SK-N-SH (cell line): ENCODE measurements at regions of chr10 and their contacts with region 1.

Region 1: DNA sequence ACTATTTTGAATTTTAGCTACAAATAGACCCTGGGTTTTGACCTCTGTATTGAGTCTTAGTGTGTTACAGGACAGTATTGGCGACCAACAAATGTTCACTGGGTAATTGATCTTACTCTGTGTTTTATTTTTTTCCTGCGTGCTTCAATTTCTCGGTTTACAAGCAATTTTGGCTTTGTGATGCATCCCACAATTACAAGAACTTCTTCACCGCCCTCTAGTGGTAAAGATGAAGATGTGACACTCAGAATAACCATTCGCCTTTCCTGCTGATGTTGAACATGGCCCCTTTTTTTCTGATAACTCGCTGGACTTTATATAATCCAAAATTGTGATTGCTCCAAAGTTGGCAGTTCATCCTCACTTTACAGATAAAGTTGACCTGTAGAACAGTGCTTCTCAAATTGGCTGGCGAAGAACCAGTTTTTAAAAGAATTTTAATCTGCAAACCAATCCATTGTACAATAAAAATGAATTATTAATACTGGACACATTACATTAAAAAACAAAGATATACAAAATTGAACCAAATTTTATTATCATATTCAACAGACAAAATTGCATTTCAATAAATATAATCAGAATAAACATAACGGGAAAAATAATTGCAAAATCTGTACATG is 20.2 kb upstream of the SMC3 start:
- DNase-seq: peak; percentile 65
- H3K4me3 ChIP-seq: no peak overlapping the region
- H3K27ac ChIP-seq: no peak overlapping the region
- H3K4me1 ChIP-seq: no peaks in the 10 kb centered on the region
- H3K27me3 ChIP-seq: no peaks in the 10 kb centered on the region
- CTCF ChIP-seq: peak; percentile 87
- EP300 ChIP-seq: no peak
- RAD21 ChIP-seq: peak; percentile 93

Region 2: GRCh38 chr10:110042181-110042580 is 505.1 kb before region 1 on chr10:
- CTCF ChIA-PET with region 1: no interaction called
- POLR2A ChIA-PET with region 1: no interaction called
- DNase-seq: no peak
- H3K4me3 ChIP-seq: no peak overlapping the region
- H3K27ac ChIP-seq: no peak overlapping the region
- H3K4me1 ChIP-seq: peaks cover 3 to 9% of the 10 kb centered on the region in 2 experiments; a peak in 2 of 4 replicates
- H3K27me3 ChIP-seq: no peaks in the 10 kb centered on the region
- CTCF ChIP-seq: no peak
- EP300 ChIP-seq: no peak
- RAD21 ChIP-seq: no peak

Region 3: DNA sequence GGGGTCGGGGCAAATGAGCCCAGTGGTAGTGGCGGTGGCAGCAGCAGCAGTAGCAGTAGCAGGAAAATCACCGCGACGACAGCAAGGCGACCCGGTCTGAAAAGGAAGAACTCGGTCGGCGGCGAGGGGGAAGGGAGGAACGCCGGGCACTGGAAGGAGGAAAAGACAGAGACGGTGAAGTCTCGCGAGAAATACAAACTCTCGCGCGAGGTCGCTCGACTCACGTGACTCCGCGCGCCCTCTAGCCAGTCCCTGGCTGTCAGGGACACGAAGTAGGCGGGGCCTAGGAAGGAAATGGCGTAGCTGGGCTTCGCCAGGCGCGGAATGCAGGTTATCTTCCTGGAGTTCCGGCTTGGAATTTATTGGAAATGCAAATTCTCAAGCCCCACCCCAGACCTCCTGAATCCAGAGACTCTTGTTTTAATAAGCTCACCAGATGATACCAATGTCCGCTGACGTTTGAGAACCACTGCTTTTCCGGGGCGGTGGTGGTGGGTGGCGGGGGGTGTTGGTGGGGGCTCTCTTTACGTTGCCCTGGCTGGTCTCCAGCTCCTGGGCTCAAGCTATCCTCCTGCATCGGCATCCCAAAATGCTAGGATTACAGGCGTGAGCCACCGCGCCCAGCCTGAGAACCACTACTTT is 242.3 kb before region 1 on chr10 and contains the start of gene SMNDC1:
- CTCF ChIA-PET with region 1: interaction called, 34 read pairs
- POLR2A ChIA-PET with region 1: interaction called, 3 read pairs
- DNase-seq: peak; percentile 95
- H3K4me3 ChIP-seq: peak within 1 kb of the TSS; percentile 86 to 94
- H3K27ac ChIP-seq: peak within 1 kb of the TSS; percentile 93 to 95
- H3K4me1 ChIP-seq: peaks cover 13 to 18% of the 10 kb centered on the region in 2 experiments; a peak in 3 of 4 replicates
- H3K27me3 ChIP-seq: no peaks in the 10 kb centered on the region
- CTCF ChIP-seq: no peak
- EP300 ChIP-seq: no peak
- RAD21 ChIP-seq: no peak
- polyA plus RNA-seq, gene SMNDC1: 13.3 and 14.2 TPM in 2 replicates

Region 4: DNA sequence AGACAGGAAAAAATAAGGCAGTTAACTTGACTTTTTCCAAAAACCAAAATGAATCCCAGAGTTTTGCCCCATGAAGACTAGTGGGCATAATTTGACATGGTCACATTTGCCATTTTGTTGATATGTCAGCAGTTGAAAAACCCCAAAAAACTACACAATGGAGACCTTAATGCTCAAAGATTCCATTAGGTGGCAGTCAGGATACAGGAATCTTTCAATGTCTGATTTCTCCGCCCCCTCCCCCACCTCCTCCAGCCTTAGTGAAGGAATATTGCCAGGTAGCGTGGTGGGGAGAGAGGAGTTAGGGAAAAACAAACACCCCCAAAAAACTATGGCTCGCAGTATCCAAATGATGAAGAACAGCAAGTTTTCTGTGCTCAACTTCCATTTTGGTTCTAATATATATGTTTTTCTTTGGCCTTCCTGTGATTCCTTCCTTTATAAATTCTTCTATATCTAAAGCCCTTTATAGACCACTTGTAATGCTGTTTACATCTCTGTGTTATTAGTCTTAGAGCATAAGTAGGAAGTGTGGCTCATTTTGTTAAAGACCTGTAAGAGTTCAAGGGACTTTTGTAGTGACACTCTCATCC is 235.8 kb before region 1 on chr10:
- CTCF ChIA-PET with region 1: interaction called, 34 read pairs
- POLR2A ChIA-PET with region 1: no interaction called
- DNase-seq: peak; percentile 64
- H3K4me3 ChIP-seq: no peak overlapping the region; a peak in 1 of 4 replicates
- H3K27ac ChIP-seq: no peak overlapping the region
- H3K4me1 ChIP-seq: peaks cover 0 to 10% of the 10 kb centered on the region in 2 experiments; a peak in 3 of 4 replicates
- H3K27me3 ChIP-seq: no peaks in the 10 kb centered on the region
- CTCF ChIP-seq: peak; percentile 77
- EP300 ChIP-seq: no peak
- RAD21 ChIP-seq: peak; percentile 92

Region 5: GRCh38 chr10:110344622-110345021 is 202.6 kb before region 1 on chr10:
- CTCF ChIA-PET with region 1: interaction called, 10 read pairs
- POLR2A ChIA-PET with region 1: no interaction called
- DNase-seq: no peak
- H3K4me3 ChIP-seq: no peak overlapping the region
- H3K27ac ChIP-seq: no peak overlapping the region
- H3K4me1 ChIP-seq: no peaks in the 10 kb centered on the region
- H3K27me3 ChIP-seq: no peaks in the 10 kb centered on the region
- CTCF ChIP-seq: no peak
- EP300 ChIP-seq: no peak
- RAD21 ChIP-seq: no peak

Region 6: GRCh38 chr10:110354322-110354766 is 192.9 kb before region 1 on chr10:
- CTCF ChIA-PET with region 1: interaction called, 112 read pairs
- POLR2A ChIA-PET with region 1: no interaction called
- DNase-seq: peak; percentile 74
- H3K4me3 ChIP-seq: peak overlapping the region in 1 of 2 experiments; percentile 9; a peak in 1 of 4 replicates
- H3K27ac ChIP-seq: peak overlapping the region in 1 of 2 experiments; percentile 74; a peak in 2 of 4 replicates
- H3K4me1 ChIP-seq: peaks cover 9 to 17% of the 10 kb centered on the region in 2 experiments; a peak in 3 of 4 replicates
- H3K27me3 ChIP-seq: no peaks in the 10 kb centered on the region
- CTCF ChIP-seq: peak; percentile 87
- EP300 ChIP-seq: no peak
- RAD21 ChIP-seq: peak; percentile 83

Region 7: GRCh38 chr10:110497438-110498086 is 49.7 kb before region 1 on chr10 and contains the start of gene DUSP5:
- CTCF ChIA-PET with region 1: interaction called, 12 read pairs
- POLR2A ChIA-PET with region 1: no interaction called
- DNase-seq: peak; percentile 98
- H3K4me3 ChIP-seq: peak within 1 kb of the TSS; percentile 79 to 84
- H3K27ac ChIP-seq: peak within 1 kb of the TSS; percentile 92 to 93
- H3K4me1 ChIP-seq: peaks cover 34 to 50% of the 10 kb centered on the region in 2 experiments
- H3K27me3 ChIP-seq: no peaks in the 10 kb centered on the region
- CTCF ChIP-seq: no peak
- EP300 ChIP-seq: no peak; a peak in 1 of 4 replicates
- RAD21 ChIP-seq: no peak
- polyA plus RNA-seq, gene DUSP5: 38.2 and 52.0 TPM in 2 replicates

Region 8: DNA sequence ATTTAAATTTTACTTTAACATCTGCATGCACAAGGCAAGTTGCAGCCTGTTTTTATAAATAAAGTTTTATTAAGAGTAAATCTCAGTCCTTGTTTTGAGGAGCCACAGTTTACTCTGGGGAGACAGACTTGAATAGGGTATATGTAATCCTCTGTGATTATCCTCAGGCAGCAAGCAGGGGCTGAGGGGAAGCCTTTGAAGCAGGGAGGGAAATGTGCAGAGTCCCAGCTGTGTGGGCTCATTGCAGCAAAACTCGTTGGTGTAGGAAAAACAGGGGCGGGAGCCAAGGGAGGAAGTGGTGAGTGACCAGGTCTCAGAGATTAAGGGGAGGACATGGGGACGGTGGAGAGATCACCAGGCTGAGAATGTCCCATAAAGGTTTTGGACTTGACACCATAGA is 14.1 kb before region 1 on chr10:
- CTCF ChIA-PET with region 1: interaction called, 19 read pairs
- POLR2A ChIA-PET with region 1: no interaction called
- DNase-seq: no peak
- H3K4me3 ChIP-seq: no peak overlapping the region
- H3K27ac ChIP-seq: no peak overlapping the region
- H3K4me1 ChIP-seq: peaks cover 0 to 44% of the 10 kb centered on the region in 2 experiments; a peak in 3 of 4 replicates
- H3K27me3 ChIP-seq: no peaks in the 10 kb centered on the region
- CTCF ChIP-seq: no peak
- EP300 ChIP-seq: no peak
- RAD21 ChIP-seq: no peak